Panc1 (cell line): ENCODE measurements at regions of chr15 and their contacts with region 1.

Region 1: DNA sequence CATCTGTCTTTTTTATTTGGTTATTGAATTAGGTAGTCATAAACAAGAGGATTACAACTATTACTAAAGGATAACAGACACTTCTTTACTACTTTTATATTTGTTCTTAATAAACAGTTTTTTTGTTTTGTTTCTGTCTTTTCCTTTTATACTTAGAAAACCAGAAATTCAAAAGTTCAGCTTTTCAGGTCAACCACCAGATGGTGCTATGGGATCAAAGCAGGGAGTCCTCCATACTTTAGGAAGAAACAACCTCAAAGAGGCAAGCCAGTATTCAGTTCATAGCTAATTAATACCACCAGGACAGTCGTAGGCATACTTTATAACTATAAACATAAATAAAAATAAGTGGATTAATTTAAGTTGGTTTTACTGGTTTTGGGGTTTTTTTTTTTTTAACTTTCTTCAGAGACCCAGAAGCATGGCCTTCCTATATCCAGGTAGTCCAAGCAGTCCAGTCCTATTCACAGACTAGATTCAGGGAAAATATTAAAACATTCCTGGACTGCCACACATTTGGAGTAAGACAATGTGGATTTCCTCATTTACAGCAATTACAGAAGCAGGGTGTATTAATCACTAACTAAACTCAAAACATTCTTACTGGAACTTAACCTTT is 16.0 kb upstream of the EID1 start:
- DNase-seq: no peak
- ATAC-seq: peak; percentile 84
- H3K4me3 ChIP-seq: no peak overlapping the region
- H3K27ac ChIP-seq: no peak overlapping the region
- H3K4me1 ChIP-seq: no peaks in the 10 kb centered on the region
- H3K27me3 ChIP-seq: no peaks in the 10 kb centered on the region
- CTCF ChIP-seq: peak; percentile 83; the same call in 1 of the 2 replicates

Region 2: GRCh38 chr15:48748535-48748934 is 113.4 kb before region 1 on chr15:
- CTCF ChIA-PET with region 1: no interaction called
- POLR2A ChIA-PET with region 1: no interaction called
- in situ Hi-C with region 1: no loop called
- intact Hi-C with region 1: no loop called
- DNase-seq: no peak
- ATAC-seq: no peak
- H3K4me3 ChIP-seq: no peak overlapping the region
- H3K27ac ChIP-seq: no peak overlapping the region
- H3K4me1 ChIP-seq: no peaks in the 10 kb centered on the region
- H3K27me3 ChIP-seq: no peaks in the 10 kb centered on the region
- CTCF ChIP-seq: no peak

Region 3: GRCh38 chr15:48913141-48913540 is 51.2 kb after region 1 on chr15:
- CTCF ChIA-PET with region 1: no interaction called
- POLR2A ChIA-PET with region 1: no interaction called
- in situ Hi-C with region 1: no loop called
- intact Hi-C with region 1: no loop called
- DNase-seq: no peak
- ATAC-seq: no peak
- H3K4me3 ChIP-seq: no peak overlapping the region
- H3K27ac ChIP-seq: no peak overlapping the region
- H3K4me1 ChIP-seq: no peaks in the 10 kb centered on the region
- H3K27me3 ChIP-seq: no peaks in the 10 kb centered on the region
- CTCF ChIP-seq: no peak

Region 4: GRCh38 chr15:48963524-48964113 is 101.7 kb after region 1 on chr15 and contains the start of gene SHC4:
- CTCF ChIA-PET with region 1: interaction called, 4 read pairs
- POLR2A ChIA-PET with region 1: interaction called, 3 read pairs
- in situ Hi-C with region 1: no loop called
- intact Hi-C with region 1: loop called (anchors 1 kb)
- DNase-seq: no peak
- ATAC-seq: peak; percentile 52
- H3K4me3 ChIP-seq: peak within 1 kb of the TSS; percentile 35 to 44
- H3K27ac ChIP-seq: no peak within 1 kb of the TSS
- H3K4me1 ChIP-seq: peaks cover 6% of the 10 kb centered on the region
- H3K27me3 ChIP-seq: peaks cover 20% of the 10 kb centered on the region
- CTCF ChIP-seq: peak; percentile 17; the same call in 1 of the 2 replicates
- total RNA-seq, gene SHC4: 0.10 TPM

Region 5: DNA sequence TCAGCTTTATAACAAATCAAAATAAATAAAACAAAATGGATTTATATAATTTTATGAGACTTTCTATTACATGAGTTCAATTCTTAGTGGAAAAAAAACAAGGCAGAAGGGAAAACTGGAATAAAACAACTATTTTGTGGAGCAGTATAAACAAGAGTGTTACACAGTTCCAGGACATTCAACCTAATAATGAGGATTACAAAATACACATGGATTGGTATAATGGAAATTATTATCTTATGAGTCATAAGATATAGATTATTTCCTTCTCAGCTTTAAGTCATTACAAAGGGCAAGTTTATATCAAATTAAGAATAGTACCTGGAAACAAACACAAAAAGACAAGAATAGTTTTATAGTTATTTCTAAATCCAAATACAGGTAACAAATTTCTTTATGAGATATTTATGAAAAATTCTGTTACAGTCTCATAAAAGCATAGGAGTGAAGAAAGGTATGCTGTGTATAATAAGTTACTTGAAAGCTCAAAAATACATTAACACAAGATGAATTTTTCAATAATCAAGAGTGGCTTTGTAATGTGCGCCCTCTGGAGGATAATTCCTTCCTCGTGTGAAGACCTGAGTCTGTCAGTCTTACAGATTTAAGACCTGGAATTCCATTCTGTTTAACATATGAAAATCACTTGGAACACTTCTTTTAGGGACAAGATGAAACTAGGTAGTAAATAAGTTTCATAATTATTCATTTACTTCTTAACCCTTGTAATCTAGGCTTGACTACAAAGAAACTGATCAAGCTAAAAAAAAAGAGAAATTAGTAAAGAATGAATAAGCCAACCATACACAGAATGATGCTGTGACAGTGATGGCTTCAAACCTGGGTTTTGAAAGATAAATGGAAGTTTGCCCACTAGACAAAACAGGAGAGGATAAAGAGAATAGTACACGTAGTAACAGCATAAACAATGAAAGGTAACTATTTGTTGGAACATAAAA is 284.0 kb after region 1 on chr15:
- CTCF ChIA-PET with region 1: interaction called, 3 read pairs
- POLR2A ChIA-PET with region 1: no interaction called
- in situ Hi-C with region 1: no loop called
- intact Hi-C with region 1: loop called (anchors 2 kb)
- DNase-seq: peak; percentile 48
- ATAC-seq: peak; percentile 79; the same call in 1 of the 2 replicates
- H3K4me3 ChIP-seq: no peak overlapping the region
- H3K27ac ChIP-seq: no peak overlapping the region
- H3K4me1 ChIP-seq: peaks cover 12% of the 10 kb centered on the region; the same call in 1 of the 2 replicates
- H3K27me3 ChIP-seq: no peaks in the 10 kb centered on the region
- CTCF ChIP-seq: peak; percentile 81; the same call in 1 of the 2 replicates

Region 6: GRCh38 chr15:49421991-49422390 is 560.1 kb after region 1 on chr15:
- CTCF ChIA-PET with region 1: no interaction called
- POLR2A ChIA-PET with region 1: no interaction called
- in situ Hi-C with region 1: no loop called
- intact Hi-C with region 1: loop called (anchors 5 kb)
- DNase-seq: no peak
- ATAC-seq: 0 out of 2 replicates have a peak, but pooled peaks have one; percentile 56
- H3K4me3 ChIP-seq: no peak overlapping the region
- H3K27ac ChIP-seq: no peak overlapping the region
- H3K4me1 ChIP-seq: no peaks in the 10 kb centered on the region
- H3K27me3 ChIP-seq: peaks cover 2% of the 10 kb centered on the region; the same call in 1 of the 2 replicates
- CTCF ChIP-seq: peak; percentile 79